PC-9 (cell line): ENCODE measurements at regions of chr10 and their contacts with region 1.

Region 1: GRCh38 chr10:86688398-86688921 is 20.1 kb downstream of the LDB3 start:
- DNase-seq: peak in 1 of 2 experiments; percentile 38
- H3K4me3 ChIP-seq: no peak overlapping the region
- H3K27ac ChIP-seq: no peak overlapping the region
- H3K4me1 ChIP-seq: no peaks in the 10 kb centered on the region; the same call in 1 of the 2 replicates
- H3K27me3 ChIP-seq: no peaks in the 10 kb centered on the region
- CTCF ChIP-seq: peak; percentile 77

Region 2: DNA sequence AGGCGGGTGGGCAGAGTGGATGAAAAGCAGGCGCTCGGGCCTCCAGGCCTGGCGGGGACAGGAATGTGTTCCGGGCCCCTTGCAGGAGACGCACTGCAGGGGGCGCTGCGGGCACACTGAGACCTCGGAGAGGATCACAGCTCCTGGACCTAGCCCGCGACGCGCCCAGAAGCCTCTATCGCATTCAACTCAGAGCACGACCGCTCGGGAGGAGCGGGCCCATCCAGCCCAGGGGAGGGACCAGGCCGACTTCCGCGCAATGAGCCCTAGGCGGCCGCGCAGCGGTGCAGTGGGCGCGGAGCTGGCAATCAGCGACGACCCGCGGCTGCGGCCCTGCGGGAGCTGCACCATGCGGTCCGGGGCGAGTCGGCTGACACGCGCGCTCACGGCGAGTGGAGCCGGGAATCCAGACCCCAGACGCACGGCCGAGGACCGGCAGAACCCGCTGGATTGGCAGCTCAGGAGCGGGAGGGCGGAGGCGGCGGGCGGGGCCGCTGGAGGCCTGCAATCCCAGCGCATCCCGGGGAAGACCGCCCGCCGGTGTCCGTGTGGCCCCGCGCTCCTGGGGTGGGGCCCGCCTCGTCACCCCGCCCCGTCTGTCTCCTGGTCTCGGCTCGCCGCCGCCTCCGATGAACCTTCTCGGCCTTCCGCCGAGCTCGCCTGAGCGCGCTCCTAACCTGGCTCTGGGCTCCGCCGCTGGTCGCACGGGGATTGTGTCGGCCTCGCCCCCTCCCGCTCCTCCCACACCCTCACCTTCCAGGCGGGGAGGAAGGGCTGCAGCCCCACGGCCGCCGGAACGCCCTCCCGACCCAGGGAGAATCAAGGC is 288.4 kb before region 1 on chr10:
- CTCF ChIA-PET with region 1: no interaction called
- POLR2A ChIA-PET with region 1: no interaction called
- intact Hi-C with region 1: loop called (anchors 5 kb)
- DNase-seq: peak; percentile 81 to 86
- H3K4me3 ChIP-seq: peak overlapping the region; percentile 66
- H3K27ac ChIP-seq: no peak overlapping the region
- H3K4me1 ChIP-seq: no peaks in the 10 kb centered on the region
- H3K27me3 ChIP-seq: no peaks in the 10 kb centered on the region
- CTCF ChIP-seq: peak; percentile 75

Region 3: DNA sequence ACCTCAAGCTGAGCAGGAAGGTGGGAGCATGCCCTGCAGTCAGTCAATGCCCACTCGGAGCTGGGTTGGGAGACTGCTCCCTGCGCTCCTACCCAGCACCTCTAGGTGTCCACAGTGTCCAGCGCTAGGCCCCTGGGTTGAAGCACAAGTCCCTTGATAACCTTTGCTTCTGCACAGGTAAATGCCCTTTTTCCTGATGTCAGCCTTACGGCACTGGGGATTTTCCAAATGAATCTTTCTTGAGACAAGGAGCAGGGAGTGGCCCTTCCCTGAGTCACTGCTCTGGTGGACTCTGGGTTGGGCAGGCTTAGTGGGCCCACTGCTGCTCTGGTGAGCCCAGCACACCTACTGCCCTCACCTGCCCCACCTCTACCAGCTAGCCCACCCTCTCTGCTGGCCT is 96.0 kb before region 1 on chr10:
- CTCF ChIA-PET with region 1: interaction called, 5 read pairs
- POLR2A ChIA-PET with region 1: no interaction called
- intact Hi-C with region 1: loop called (anchors 1 kb)
- DNase-seq: peak; percentile 52 to 78
- H3K4me3 ChIP-seq: no peak overlapping the region
- H3K27ac ChIP-seq: peak overlapping the region; percentile 81
- H3K4me1 ChIP-seq: peaks cover 26% of the 10 kb centered on the region
- H3K27me3 ChIP-seq: no peaks in the 10 kb centered on the region
- CTCF ChIP-seq: peak; percentile 68

Region 4: DNA sequence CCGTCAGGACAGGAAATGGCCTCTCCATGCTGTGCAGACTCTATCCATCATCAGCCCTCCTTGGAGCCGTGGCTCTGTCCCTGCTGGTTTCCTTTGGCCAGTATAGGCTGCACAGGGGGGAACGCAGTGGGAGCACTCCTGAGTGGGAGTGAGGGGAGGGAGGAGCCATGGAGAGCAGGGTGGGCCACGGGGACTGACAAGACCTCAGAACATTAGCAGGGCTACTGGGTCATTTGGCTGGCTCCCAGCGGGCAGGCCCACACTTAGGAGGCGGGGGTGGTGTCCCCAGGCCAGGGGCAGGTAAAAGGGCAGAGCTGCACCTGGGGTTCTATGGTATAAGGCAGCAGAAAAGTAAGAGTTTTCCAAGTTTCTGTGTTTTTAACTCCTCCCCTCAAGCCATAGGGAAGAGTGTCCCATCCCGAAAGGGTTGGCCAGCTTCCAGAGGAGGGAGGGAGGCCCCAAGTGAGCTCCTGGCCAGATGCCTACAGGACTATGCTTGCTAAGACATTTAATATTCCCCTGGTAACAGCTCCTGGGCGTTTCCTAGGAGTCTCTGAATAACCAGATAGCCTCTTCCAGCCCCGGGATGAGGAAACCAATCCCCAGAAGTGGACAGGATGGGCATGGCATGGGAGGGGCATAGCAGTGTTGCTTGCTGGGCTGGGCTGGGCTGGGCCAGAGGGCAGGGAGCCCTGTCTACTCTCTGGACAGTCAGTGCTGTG is 39.6 kb before region 1 on chr10:
- CTCF ChIA-PET with region 1: no interaction called
- POLR2A ChIA-PET with region 1: no interaction called
- intact Hi-C with region 1: loop called (anchors 5 kb)
- DNase-seq: peak; percentile 75 to 87
- H3K4me3 ChIP-seq: no peak overlapping the region
- H3K27ac ChIP-seq: peak overlapping the region; percentile 61
- H3K4me1 ChIP-seq: peaks cover 61% of the 10 kb centered on the region
- H3K27me3 ChIP-seq: no peaks in the 10 kb centered on the region
- CTCF ChIP-seq: no peak

Region 5: DNA sequence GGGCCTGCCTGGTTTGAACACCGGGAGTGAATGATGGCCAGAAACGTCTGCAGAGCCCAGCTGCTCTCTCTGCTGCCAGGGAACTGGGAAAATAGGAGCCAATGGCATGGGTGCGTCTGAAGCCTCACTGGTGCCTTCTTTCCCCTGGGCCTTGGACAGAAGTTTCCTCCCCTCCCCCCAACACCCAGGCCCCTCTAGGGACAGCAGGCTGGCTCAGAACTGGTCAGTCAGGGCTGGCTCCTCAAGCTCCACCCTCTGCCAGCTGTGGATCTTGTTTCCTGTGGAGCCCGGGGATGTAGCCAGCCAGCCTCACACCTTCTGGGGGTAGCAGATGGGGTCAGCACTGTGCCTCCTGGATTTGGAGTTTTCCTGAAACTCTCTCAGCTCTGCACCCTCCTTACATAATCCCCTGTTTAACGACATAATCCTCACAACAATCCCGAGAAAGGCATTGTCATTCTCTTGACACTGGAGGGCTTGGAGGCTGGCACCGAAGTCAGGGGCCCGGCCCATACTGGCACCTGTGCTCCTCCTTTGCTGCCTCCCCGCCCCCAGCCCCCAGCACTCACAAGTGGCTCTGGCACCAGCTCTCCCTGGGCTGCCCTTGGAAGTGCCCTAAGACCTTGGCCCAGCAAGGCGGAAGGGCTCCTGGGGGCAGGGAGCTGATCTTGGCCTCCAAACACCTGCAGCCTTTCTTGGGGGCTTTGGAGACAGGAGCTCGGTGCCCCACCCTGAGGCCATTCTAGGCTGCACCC is 14.5 kb before region 1 on chr10:
- CTCF ChIA-PET with region 1: no interaction called
- POLR2A ChIA-PET with region 1: no interaction called
- intact Hi-C with region 1: no loop called
- DNase-seq: peak in 1 of 2 experiments; percentile 23
- H3K4me3 ChIP-seq: no peak overlapping the region
- H3K27ac ChIP-seq: no peak overlapping the region
- H3K4me1 ChIP-seq: peaks cover 55% of the 10 kb centered on the region
- H3K27me3 ChIP-seq: no peaks in the 10 kb centered on the region
- CTCF ChIP-seq: no peak

Region 6: GRCh38 chr10:86773498-86773897 is 85.0 kb after region 1 on chr10:
- CTCF ChIA-PET with region 1: interaction called, 14 read pairs
- POLR2A ChIA-PET with region 1: no interaction called
- intact Hi-C with region 1: no loop called
- DNase-seq: no peak
- H3K4me3 ChIP-seq: no peak overlapping the region
- H3K27ac ChIP-seq: no peak overlapping the region
- H3K4me1 ChIP-seq: no peaks in the 10 kb centered on the region
- H3K27me3 ChIP-seq: no peaks in the 10 kb centered on the region
- CTCF ChIP-seq: no peak

Region 7: DNA sequence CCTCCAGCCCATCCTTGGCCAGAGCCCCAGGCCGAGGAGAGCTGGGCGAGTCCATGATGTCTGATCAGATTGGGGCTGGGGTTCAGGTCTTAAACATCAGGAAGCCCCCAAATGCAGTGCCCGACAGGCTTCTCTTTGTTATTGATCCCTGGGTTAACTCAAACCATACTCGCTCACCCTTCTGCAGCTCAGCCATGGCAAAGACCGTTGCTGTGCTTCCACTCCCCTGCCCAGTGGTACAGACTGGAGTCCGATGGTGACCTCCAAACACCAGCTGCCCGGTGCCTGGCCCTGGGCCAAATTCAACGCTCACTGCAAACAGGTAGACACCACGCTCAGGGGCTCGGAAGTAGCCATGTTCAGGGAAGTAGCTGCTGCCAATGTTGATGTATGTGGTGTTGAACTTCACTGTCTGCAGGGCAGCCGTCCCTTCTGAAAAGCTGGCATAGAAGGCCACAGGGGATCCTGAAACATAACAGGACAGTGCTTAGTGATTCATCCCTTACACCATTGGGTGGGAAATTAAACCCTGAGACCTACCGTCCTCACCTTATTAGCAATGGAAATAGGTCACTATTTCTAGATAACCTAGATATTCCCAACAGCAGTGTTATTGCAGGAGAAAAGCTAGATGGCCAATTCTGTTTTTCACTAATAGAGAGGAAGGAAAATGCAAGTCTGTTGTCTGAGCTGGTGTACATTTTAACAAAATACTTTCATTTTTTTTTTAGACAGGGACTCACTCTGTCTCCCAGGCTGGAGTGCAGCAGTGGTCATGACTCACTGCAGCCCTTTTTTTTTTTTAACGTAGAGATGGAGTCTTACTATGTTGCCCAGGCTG is 248.4 kb after region 1 on chr10:
- CTCF ChIA-PET with region 1: no interaction called
- POLR2A ChIA-PET with region 1: no interaction called
- intact Hi-C with region 1: loop called (anchors 2 kb)
- DNase-seq: no peak
- H3K4me3 ChIP-seq: no peak overlapping the region
- H3K27ac ChIP-seq: no peak overlapping the region
- H3K4me1 ChIP-seq: peaks cover 11% of the 10 kb centered on the region
- H3K27me3 ChIP-seq: no peaks in the 10 kb centered on the region
- CTCF ChIP-seq: no peak